Endothelial cell of umbilical vein (primary cell): ENCODE measurements at regions of chrX and their contacts with region 1.

Region 1: GRCh38 chrX:72079607-72080006 is 52.1 kb downstream of the RTL5 start:
- DNase-seq: peak; percentile 87
- H3K4me3 ChIP-seq: peak overlapping the region; percentile 44 to 84 (median 54)
- H3K27ac ChIP-seq: peak overlapping the region; percentile 87
- H3K4me1 ChIP-seq: peaks cover 39% of the 10 kb centered on the region
- H3K27me3 ChIP-seq: no peaks in the 10 kb centered on the region
- CTCF ChIP-seq: no peak
- POLR2A ChIP-seq: peak; percentile 48

Region 2: GRCh38 chrX:72018277-72019112 is 61.1 kb before region 1 on chrX:
- CTCF ChIA-PET with region 1: interaction called, 26 read pairs
- POLR2A ChIA-PET with region 1: interaction called, 3 read pairs
- dilution Hi-C with region 1: no loop called
- intact Hi-C with region 1: loop called (anchors 1 kb)
- DNase-seq: peak; percentile 90
- H3K4me3 ChIP-seq: no peak overlapping the region
- H3K27ac ChIP-seq: peak overlapping the region; percentile 32
- H3K4me1 ChIP-seq: peaks cover 10% of the 10 kb centered on the region
- H3K27me3 ChIP-seq: no peaks in the 10 kb centered on the region
- CTCF ChIP-seq: peak; percentile 39 to 57
- POLR2A ChIP-seq: no peak

Region 3: DNA sequence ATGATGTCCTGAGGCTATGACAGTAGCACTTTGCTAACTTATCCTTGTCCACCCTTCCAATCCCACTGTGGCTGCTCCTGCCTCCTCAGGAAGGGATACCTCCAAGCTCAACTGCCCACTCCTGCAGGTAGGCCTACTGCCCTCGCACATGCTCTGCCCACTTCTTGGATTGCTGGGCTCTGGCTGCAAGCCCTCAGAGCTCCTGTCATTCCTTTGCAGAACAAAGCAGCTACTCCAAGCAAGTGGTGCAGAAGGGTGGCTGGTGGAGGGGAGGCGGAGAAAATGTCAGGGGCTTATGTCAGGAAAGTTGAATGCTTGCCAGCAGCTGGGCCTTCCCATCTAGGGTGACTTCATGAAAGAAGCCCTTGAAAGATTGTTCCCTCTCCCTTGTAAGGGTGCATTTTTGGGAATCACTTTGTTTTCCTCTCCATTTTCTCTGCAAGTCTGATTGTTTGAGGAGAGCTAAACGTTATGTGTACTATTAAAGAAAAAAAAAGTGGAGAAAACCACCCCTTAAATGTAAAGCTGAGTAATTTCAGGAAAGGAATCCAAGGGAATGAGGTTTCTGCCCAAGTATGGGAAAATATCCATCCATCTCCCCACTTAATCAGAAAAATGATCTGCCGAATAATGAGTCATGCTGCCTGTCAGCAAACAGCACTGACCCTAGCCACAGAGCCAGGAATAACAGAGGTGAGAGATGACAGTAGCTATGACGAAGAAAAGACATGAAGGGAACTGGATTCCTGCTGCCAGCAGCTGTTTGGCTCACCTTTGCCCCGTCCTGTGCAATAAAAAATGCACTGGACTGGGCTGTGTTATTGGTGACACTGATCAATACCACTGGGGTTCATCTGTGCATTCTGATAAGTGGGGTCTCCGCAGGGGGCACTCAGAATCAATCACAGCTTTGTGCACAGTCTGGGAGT is 49.9 kb before region 1 on chrX:
- CTCF ChIA-PET with region 1: interaction called, 9 read pairs
- POLR2A ChIA-PET with region 1: interaction called, 3 read pairs
- dilution Hi-C with region 1: no loop called
- intact Hi-C with region 1: loop called (anchors 1 kb)
- DNase-seq: peak; percentile 89
- H3K4me3 ChIP-seq: no peak overlapping the region
- H3K27ac ChIP-seq: peak overlapping the region; percentile 52
- H3K4me1 ChIP-seq: peaks cover 23% of the 10 kb centered on the region
- H3K27me3 ChIP-seq: no peaks in the 10 kb centered on the region
- CTCF ChIP-seq: no peak
- POLR2A ChIP-seq: no peak

Region 4: DNA sequence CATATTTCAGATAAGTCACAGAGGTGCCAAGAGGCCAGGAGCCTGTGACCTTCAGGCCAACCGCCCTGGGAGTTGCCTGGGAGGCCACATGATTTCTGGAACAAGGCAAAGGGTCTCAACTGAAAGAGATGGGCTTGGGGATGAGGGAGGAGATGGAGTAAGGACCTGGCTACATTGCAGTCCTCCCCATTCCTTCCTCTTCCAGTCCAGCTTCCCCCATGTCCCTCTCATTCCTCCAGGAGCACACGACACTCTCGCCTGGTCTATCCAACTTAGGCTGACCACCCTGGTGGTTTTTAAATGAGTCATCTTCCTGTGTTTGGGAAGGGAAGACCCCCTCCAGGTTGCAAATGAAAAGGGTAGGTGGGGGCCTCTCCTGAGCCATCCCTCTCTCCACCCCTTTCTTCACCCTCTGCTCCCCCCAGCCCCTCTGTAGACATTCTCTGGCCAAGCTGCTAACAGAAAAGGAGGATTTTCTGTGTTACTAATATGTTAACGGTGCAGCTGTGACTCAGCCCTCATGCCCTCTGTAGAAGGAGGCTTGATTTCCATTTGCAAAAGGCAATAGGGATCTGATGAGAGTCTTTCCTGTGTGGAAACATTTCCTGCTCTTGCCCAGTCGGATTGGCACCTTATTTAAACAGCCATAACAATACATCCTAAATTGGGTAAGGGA is 27.1 kb before region 1 on chrX:
- CTCF ChIA-PET with region 1: interaction called, 4 read pairs
- POLR2A ChIA-PET with region 1: interaction called, 4 read pairs
- dilution Hi-C with region 1: no loop called
- intact Hi-C with region 1: loop called (anchors 1 kb)
- DNase-seq: peak; percentile 64
- H3K4me3 ChIP-seq: no peak overlapping the region
- H3K27ac ChIP-seq: peak overlapping the region; percentile 58
- H3K4me1 ChIP-seq: peaks cover 24% of the 10 kb centered on the region
- H3K27me3 ChIP-seq: no peaks in the 10 kb centered on the region
- CTCF ChIP-seq: no peak
- POLR2A ChIP-seq: no peak

Region 5: DNA sequence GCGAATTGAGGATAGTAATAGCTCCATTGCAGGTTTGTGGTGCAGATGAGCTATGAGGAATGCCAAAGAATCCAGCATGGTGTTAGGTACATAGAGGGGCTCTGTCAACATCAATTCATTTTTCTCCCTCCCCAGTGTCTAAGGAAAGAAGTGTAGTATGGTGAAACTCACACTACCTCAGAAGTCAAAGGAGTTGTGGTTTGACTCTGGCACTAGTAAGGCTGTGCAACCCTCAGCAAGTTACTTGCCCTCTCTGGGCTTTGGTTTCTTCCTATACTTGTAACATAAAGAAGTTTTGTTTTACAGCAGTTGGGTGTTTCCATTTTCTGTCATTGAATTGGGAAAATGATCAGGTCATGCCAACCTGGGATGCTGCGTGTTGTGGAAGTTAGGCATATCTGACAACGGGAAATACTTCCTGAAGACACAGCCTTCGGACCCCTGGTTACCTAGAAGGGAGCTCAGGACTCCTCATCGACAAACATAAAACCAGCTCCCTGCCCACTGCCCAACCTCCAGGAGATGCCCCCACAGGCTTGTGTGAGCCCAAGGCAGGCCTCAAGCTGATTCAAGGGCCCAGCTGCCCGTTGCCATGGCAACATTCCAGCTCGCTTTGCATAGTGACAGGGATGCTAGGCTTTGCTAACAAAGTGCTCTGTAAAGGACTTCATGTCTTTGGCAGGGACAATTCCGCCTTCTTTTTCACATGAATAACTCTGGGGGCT is 19.2 kb before region 1 on chrX:
- CTCF ChIA-PET with region 1: no interaction called
- POLR2A ChIA-PET with region 1: interaction called, 3 read pairs
- dilution Hi-C with region 1: no loop called
- intact Hi-C with region 1: loop called (anchors 2 kb)
- DNase-seq: peak; percentile 34
- H3K4me3 ChIP-seq: no peak overlapping the region
- H3K27ac ChIP-seq: no peak overlapping the region
- H3K4me1 ChIP-seq: peaks cover 13% of the 10 kb centered on the region
- H3K27me3 ChIP-seq: no peaks in the 10 kb centered on the region
- CTCF ChIP-seq: no peak
- POLR2A ChIP-seq: no peak

Region 6: GRCh38 chrX:72094894-72095293 is 15.3 kb after region 1 on chrX:
- CTCF ChIA-PET with region 1: interaction called, 4 read pairs
- POLR2A ChIA-PET with region 1: no interaction called
- dilution Hi-C with region 1: no loop called
- intact Hi-C with region 1: loop called (anchors 2 kb)
- DNase-seq: peak; percentile 90
- H3K4me3 ChIP-seq: no peak overlapping the region
- H3K27ac ChIP-seq: peak overlapping the region; percentile 78
- H3K4me1 ChIP-seq: peaks cover 18% of the 10 kb centered on the region
- H3K27me3 ChIP-seq: no peaks in the 10 kb centered on the region
- CTCF ChIP-seq: no peak
- POLR2A ChIP-seq: no peak

Region 7: GRCh38 chrX:72409993-72410392 is 330.4 kb after region 1 on chrX:
- CTCF ChIA-PET with region 1: no interaction called
- POLR2A ChIA-PET with region 1: no interaction called
- dilution Hi-C with region 1: no loop called
- intact Hi-C with region 1: no loop called
- DNase-seq: peak; percentile 36
- H3K4me3 ChIP-seq: no peak overlapping the region
- H3K27ac ChIP-seq: no peak overlapping the region
- H3K4me1 ChIP-seq: peaks cover 3% of the 10 kb centered on the region
- H3K27me3 ChIP-seq: no peaks in the 10 kb centered on the region
- CTCF ChIP-seq: no peak
- POLR2A ChIP-seq: no peak